ENCODE measurements at regions of chr10 and their contacts with region 1.

Region 1: DNA sequence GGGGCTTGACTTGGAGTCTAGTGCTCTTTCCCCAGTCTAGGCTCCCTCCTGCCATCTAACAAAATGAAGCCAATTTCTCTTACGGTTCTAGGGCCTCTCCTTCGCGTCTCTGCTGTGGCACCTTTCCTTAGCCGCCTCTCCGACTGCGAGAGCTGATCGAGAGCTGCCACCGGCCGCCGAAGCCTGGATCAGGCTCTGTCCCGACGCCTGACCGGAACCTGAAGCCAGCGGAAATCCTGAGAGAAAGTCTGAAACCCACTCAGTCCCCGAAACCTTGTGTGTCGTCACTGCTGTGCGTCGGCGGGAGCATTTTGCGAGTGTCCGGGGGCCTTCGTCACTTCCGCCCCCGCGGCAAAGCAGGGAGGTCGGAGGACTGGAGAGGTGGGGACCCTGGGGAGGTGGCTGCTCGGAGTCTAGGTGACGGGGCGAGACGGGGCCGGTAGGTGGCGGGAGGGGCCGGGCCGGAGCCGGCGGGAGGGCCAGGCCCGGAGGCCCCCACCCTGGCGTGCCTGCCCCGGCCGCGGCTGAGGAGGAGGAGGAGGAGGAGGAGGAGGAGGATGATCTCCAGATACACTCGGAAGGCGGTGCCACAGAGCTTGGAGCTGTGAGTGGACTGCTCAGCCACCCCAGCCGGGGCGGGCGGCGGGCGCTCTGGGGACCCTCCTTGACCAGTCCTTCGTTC is at the starts of genes ECD and FAM149B1:
- DNase-seq: peak; percentile 89 to 92 (median 92)
- ATAC-seq: peak; percentile 99
- H3K4me3 ChIP-seq: peak within 1 kb of the TSS; percentile 60 to 92
- H3K27ac ChIP-seq: peak within 1 kb of the TSS; percentile 81 to 95 (median 92)
- H3K4me1 ChIP-seq: peaks cover 31% of the 10 kb centered on the region
- H3K27me3 ChIP-seq: no peaks in the 10 kb centered on the region
- CTCF ChIP-seq: peak in 4 of 7 experiments; percentile 19 to 50 (median 20)
- POLR2A ChIP-seq: peak; percentile 78 to 95 (median 95)
- total RNA-seq, gene ECD: 14.8 to 19.8 TPM
- total RNA-seq, gene FAM149B1: 4.9 to 17.1 TPM

Region 2: GRCh38 chr10:73105378-73105777 is 62.5 kb before region 1 on chr10:
- intact Hi-C with region 1: loop called (anchors 10 kb)
- DNase-seq: no peak
- ATAC-seq: no peak
- H3K4me3 ChIP-seq: no peak overlapping the region
- H3K27ac ChIP-seq: no peak overlapping the region
- H3K4me1 ChIP-seq: no peaks in the 10 kb centered on the region
- H3K27me3 ChIP-seq: no peaks in the 10 kb centered on the region
- CTCF ChIP-seq: no peak
- POLR2A ChIP-seq: no peak

Region 3: DNA sequence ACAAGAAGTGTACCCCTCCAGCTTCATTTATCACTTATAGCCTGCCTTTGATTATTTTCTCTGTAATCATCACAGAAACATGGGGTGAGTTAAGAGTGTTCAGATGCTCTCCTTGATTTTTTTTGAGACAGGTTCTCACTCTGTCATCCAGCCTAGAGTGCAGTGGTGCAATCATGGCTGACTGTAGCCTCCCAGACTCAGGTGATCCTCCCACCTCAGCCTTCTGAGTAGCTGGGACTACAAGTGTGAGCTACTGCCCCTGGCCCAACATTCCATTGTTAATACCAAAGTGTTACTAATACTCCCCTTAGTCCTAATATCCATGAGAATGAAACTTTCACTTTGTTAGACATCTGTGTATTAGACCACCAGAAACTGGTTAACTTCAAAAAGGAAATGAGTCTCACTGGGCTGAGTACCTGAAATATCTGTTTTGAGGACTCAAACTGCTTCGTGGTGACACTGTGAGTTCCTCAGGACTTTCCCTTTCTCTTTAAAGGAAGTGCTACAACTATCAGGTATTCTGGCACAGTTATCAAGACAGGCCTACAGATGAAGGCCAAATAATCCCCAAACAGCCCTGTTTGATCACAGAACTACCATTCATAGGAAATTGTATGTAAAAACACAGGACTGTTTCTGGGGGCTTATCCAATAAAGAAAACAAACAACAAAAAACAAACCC is 211.3 kb after region 1 on chr10:
- intact Hi-C with region 1: no loop called
- DNase-seq: no peak
- ATAC-seq: no peak
- H3K4me3 ChIP-seq: no peak overlapping the region
- H3K27ac ChIP-seq: no peak overlapping the region
- H3K4me1 ChIP-seq: no peaks in the 10 kb centered on the region
- H3K27me3 ChIP-seq: no peaks in the 10 kb centered on the region
- CTCF ChIP-seq: no peak
- POLR2A ChIP-seq: no peak

Measured in body of pancreas (tissue), 4 donors.